ENCODE measurements at regions of chr17 and their contacts with region 1.

Region 1: GRCh38 chr17:81553018-81553615 is 964 bp upstream of the FAAP100 start:
- DNase-seq: peak; percentile 92
- H3K4me3 Mint-ChIP-seq: peak overlapping the region; percentile 91
- H3K27ac Mint-ChIP-seq: peak overlapping the region; percentile 94
- H3K4me1 Mint-ChIP-seq: peaks cover 24% of the 10 kb centered on the region
- H3K27me3 Mint-ChIP-seq: no peaks in the 10 kb centered on the region

Region 2: DNA sequence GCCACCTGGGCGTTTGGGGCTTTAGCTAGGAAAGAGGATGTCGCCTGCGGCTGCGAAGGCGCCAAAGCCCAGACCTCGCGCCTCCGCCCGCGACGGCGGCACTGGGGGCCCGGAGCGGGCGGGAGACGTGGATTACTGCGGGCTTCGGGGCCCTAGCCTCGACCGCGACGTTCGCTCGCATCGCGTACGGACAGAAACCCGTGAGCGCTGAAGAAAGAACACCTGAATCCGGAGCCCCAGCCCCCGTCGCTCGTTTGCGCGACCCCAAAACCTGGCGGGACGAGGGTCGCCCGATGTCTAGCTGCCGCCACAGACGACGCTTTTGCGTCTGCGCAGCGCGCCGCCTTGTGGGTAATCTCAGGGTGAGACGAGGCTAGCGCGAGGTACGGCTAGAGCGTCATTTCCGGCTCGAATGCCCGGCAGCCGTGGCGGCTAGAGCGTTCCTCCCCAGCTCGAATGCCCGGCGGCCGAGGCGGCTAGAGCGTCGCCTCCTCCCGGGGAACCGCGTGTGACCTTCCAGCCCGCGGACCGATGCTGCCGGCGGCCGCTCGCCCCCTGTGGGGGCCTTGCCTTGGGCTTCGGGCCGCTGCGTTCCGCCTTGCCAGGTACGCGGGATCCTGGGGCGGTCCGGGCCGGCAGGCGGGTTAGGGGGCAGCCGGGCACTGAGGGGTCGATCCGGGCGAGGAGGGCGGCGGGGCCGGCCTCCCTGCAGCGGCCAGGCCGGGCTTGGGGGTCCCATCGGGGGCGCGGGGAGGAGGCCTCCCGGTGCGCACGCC is 150.0 kb after region 1 on chr17 and contains the start of gene MRPL12:
- intact Hi-C with region 1: loop called (anchors 5 kb)
- DNase-seq: peak; percentile 97
- H3K4me3 Mint-ChIP-seq: peak within 1 kb of the TSS; percentile 97
- H3K27ac Mint-ChIP-seq: peak within 1 kb of the TSS; percentile 98
- H3K4me1 Mint-ChIP-seq: peaks cover 19% of the 10 kb centered on the region
- H3K27me3 Mint-ChIP-seq: no peaks in the 10 kb centered on the region
- total RNA-seq, gene MRPL12: 232 and 233 TPM in 2 replicates